OCI-LY7 (cell line): ENCODE measurements at regions of chr14 and their contacts with region 1.

Region 1: DNA sequence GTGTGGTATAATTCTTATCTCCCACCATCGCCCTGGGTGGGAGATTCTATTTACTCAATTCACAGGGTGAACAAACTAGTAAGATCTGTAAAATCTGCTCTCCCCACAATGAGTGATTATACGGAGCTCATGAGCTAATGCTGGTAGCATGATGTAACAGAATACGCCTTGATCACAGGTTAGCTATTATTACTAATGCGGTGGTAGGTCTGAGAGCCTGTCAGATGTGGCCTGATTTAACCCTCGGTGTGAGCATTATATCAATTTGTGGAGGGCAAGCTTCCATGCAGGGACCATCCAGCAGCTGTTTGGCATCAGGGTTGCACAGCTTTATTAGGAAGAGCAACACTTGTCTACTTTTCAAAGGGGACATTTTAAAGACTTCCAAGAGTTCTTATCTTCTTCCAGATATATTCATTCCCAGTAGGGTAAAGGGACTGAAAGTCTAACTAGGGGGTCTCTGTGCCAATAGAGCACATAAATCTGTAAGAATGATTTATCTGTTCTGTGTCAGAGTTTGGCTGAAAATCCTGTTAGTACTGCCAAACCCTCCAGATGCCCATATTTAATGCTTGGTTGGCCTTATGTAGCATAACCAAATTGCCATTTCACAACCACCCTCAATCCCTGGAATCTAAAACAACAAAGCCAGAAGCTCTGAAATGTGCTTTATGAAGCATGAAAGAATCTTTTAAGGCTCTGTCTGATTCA is 18.7 kb downstream of the TSHR start:
- DNase-seq: no peak
- H3K4me3 ChIP-seq: no peak overlapping the region
- H3K27ac ChIP-seq: no peak overlapping the region
- H3K4me1 ChIP-seq: peaks cover 53% of the 10 kb centered on the region
- CTCF ChIP-seq: no peak

Region 2: DNA sequence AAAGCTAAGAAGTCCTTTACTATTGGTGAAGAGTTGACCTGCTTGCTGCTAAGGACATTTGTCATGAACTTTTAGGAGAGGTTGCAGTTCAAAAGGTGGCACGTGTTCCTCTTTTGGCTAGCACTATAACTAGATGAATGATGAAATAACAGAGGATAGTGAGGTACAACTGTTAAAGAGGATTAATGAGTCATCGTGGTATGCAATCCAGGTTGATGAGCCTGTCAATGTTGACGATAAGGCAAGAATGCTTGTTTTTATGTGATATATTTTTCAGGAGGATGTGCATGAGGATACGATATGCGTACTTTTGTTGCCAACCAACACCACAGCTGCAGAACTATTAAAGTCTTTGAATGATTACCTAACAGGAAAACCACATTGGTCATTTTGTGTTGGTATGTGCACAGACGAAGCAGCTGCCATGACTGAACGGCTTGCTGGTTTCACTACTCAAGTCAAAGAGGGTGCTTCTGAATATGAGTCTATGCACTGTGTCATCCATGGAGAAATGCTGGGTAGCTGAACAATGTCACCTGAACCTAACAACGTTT is 43.2 kb before region 1 on chr14:
- CTCF ChIA-PET with region 1: interaction called, 3 read pairs
- POLR2A ChIA-PET with region 1: interaction called, 11 read pairs
- intact Hi-C with region 1: loop called (anchors 1 kb)
- DNase-seq: peak; percentile 94
- H3K4me3 ChIP-seq: peak overlapping the region; percentile 42
- H3K27ac ChIP-seq: peak overlapping the region; percentile 97
- H3K4me1 ChIP-seq: peaks cover 80% of the 10 kb centered on the region
- CTCF ChIP-seq: no peak